ENCODE measurements at regions of chr3 and their contacts with region 1.

Region 1: GRCh38 chr3:58332575-58333188 is at the start of gene PXK:
- DNase-seq: peak; percentile 91
- ATAC-seq: peak; percentile 98
- total RNA-seq, gene PXK: 12.0 TPM

Region 2: GRCh38 chr3:57826245-57826951 is 506.3 kb before region 1 on chr3:
- intact Hi-C with region 1: no loop called
- DNase-seq: no peak
- ATAC-seq: peak; percentile 27

Region 3: DNA sequence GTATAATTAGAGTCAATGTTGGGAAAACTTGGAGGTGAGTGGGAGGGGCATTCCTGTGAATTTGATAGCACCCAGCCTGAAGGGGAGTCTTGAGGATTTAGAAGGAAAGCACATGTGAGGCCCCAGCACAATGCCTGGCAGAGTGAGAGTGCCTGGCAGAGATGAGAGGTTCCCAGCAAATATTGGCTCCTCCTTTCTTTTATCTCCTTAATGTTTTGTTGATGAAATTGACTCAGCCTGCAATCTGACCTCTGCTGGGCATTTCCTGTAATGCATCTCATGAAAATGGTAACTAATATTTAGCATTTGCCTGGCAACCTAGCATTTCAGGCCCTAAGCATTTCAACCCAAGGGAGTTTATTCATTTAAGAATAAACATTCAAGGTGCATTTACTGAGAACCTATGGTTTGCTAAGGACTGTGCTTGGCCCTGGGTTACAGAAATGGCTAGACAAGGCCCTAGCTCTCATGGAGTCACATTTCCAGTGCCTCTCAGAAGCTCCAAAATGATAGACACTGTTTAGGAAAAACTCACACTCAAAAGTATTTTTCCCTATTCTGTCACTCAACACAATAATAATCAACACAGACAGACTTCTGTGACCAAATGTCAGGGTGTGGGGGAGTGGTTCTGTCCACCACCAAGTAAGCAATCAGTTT is 82.0 kb after region 1 on chr3:
- intact Hi-C with region 1: loop called (anchors 5 kb)
- DNase-seq: no peak
- ATAC-seq: peak; percentile 80

Region 4: GRCh38 chr3:58497097-58497496 is 164.4 kb after region 1 on chr3:
- intact Hi-C with region 1: loop called (anchors 5 kb)
- DNase-seq: no peak
- ATAC-seq: no peak